Keratinocyte (primary cell): ENCODE measurements at regions of chr5 and their contacts with region 1.

Region 1: DNA sequence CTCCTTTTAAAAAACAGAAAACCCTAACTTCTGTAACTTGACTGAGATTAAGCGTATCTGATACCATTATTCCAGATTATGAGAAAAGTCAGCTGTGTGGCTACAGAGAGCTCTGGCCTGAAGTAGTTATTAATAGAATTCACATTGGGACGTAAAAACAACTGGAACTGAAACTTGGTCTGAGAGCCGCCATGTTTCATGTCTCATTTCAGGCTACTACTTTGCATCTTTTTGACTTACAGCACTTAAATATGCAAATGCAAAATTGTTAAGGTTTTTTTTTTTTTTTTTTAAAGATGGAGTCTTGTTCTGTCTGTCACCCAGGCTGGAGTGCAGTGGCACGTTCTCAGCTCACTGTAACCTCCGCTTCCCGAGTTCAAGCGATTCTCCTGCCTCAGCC is 25.2 kb downstream of the MAP3K1 start:
- DNase-seq: no peak
- H3K4me3 ChIP-seq: no peak overlapping the region
- H3K27ac ChIP-seq: no peak overlapping the region
- H3K4me1 ChIP-seq: peaks cover 12% of the 10 kb centered on the region
- H3K27me3 ChIP-seq: no peaks in the 10 kb centered on the region
- CTCF ChIP-seq: no peak

Region 2: GRCh38 chr5:56270568-56271392 is 569.8 kb before region 1 on chr5:
- dilution Hi-C with region 1: loop called (anchors 10 kb)
- DNase-seq: peak; percentile 25
- H3K4me3 ChIP-seq: no peak overlapping the region
- H3K27ac ChIP-seq: no peak overlapping the region
- H3K4me1 ChIP-seq: peaks cover 12% of the 10 kb centered on the region
- H3K27me3 ChIP-seq: no peaks in the 10 kb centered on the region
- CTCF ChIP-seq: peak; percentile 100

Region 3: GRCh38 chr5:56475689-56476486 is 364.7 kb before region 1 on chr5:
- dilution Hi-C with region 1: no loop called
- DNase-seq: no peak
- H3K4me3 ChIP-seq: no peak overlapping the region
- H3K27ac ChIP-seq: no peak overlapping the region
- H3K4me1 ChIP-seq: peaks cover 13% of the 10 kb centered on the region
- H3K27me3 ChIP-seq: no peaks in the 10 kb centered on the region
- CTCF ChIP-seq: no peak

Region 4: GRCh38 chr5:56751572-56752313 is 88.9 kb before region 1 on chr5:
- dilution Hi-C with region 1: no loop called
- DNase-seq: no peak
- H3K4me3 ChIP-seq: no peak overlapping the region
- H3K27ac ChIP-seq: no peak overlapping the region
- H3K4me1 ChIP-seq: no peaks in the 10 kb centered on the region
- H3K27me3 ChIP-seq: no peaks in the 10 kb centered on the region
- CTCF ChIP-seq: no peak